ENCODE measurements at regions of chr10 and their contacts with region 1.

Region 1: DNA sequence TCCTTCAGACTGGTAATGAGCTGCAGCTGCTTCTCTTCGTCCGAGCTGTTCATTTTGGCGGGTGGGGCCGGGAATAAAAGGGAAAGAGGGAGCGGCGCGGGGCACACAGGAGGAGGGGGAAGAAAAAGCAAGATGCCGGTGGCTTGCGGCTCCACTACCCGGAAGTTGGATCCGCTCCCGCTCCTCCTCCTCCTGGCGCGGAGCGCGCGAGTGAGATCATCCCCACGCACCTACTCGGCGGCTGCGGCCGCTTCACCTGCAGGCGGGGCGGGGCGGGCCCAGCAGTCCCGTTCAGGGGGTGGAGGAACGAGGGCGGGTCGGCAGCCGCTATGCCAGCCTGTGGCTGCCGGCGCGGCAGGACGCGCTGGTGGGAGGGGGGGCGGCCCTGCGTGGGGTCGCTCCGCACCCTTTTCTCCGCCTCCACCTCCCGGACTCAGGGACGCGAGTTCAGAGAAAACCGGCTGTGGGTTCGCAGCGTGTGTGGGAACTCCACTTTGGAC is at the start of gene SHTN1:
- DNase-seq: peak; percentile 66 to 87 (median 77)
- H3K4me3 ChIP-seq: peak within 1 kb of the TSS; percentile 54 to 97 (median 85)
- H3K27ac ChIP-seq: peak within 1 kb of the TSS; percentile 58 to 99 (median 98)
- H3K27me3 ChIP-seq: no peaks in the 10 kb centered on the region
- CTCF ChIP-seq: peak in 5 of 56 donors; percentile 9 to 39 (median 24)
- total RNA-seq, gene SHTN1: 65.1 to 426 (median 156) TPM

Region 2: GRCh38 chr10:116809483-116810119 is 195.5 kb before region 1 on chr10:
- intact Hi-C with region 1: loop called in 1 of 2 experiments (anchors 10 kb)
- DNase-seq: peak in 1 of 10 donors; percentile 25
- H3K4me3 ChIP-seq: no peak overlapping the region
- H3K27ac ChIP-seq: no peak overlapping the region
- H3K27me3 ChIP-seq: peaks cover 0 to 11% (median 0%) of the 10 kb centered on the region in 45 donors
- CTCF ChIP-seq: peak in 38 of 56 donors; percentile 12 to 52 (median 32)

Region 3: DNA sequence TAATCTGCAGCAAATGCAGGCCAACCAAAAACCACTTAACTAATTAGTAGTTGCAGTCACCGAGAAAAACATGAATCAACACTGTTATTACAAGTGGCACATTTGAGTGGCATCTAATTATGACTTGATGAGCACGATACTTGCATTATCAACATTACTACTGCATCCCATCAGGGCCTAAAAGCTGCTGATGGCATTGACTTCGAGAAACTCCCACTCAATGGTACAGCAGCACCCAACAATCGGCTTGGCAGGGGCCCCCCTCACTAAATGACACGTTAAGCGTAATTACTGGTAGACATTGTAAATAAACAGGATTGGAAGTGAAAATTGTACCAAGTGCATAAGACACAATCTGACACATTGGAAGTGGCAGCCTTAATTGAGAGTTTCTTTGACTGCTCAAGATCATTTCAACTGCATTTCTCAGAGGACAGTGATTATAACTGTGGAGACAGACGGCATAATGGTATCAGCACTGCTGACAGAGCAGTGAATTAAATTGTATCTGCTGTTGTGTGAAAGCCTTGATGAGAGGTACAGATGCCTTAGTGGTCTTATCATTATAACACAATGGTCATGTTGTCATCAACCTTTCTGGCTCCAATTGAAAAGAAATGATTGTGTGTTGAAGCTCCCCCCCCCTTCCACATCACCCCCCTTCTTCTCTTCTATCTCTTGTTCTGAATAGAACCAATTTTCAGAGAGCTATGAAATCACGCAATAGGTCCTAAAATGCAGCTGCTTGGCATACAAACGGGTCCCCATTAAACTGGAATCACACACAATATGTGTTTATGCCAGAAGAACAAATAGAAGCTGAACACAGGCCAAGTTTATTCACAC is 43.4 kb before region 1 on chr10:
- intact Hi-C with region 1: loop called (anchors 5 kb)
- DNase-seq: peak in 2 of 10 donors; percentile 66 to 80
- H3K4me3 ChIP-seq: peak overlapping the region in 3 of 59 donors; percentile 4 to 24 (median 10)
- H3K27ac ChIP-seq: peak overlapping the region; percentile 61 to 99 (median 92)
- H3K27me3 ChIP-seq: no peaks in the 10 kb centered on the region
- CTCF ChIP-seq: no peak

Region 4: GRCh38 chr10:117167789-117168674 is 163.0 kb after region 1 on chr10:
- intact Hi-C with region 1: loop called (anchors 2 to 5 kb)
- DNase-seq: peak; percentile 17 to 85 (median 57)
- H3K4me3 ChIP-seq: peak overlapping the region in 56 of 59 donors; percentile 1 to 63 (median 44)
- H3K27ac ChIP-seq: peak overlapping the region in 10 of 59 donors; percentile 1 to 58 (median 32)
- H3K27me3 ChIP-seq: peaks cover 0 to 94% (median 70%) of the 10 kb centered on the region in 45 donors
- CTCF ChIP-seq: peak; percentile 56 to 98 (median 90)